ENCODE measurements at regions of chr16 and their contacts with region 1.

Region 1: DNA sequence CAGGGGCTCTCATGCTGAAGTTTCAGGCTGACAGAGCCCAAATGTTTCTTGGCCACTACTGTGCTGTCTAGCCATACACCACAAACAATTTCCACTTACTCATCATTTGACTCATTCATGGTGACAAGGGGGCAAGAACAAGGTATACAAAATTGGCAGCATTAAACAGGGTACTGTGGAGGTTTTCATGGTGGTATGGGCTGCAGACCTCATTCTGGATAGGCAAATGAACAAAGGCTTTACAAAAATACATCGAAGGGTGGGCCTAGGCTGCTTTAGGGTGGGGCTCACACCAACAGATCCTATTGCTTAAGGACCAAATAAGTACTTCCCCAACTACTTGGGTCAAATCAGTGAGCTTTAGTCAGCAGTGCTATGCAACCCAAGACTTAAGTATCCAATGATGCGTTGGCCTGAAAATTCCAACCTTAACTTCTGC is 53.0 kb downstream of the N4BP1 start:
- DNase-seq: peak; percentile 69 to 93 (median 84)
- H3K4me3 ChIP-seq: peak overlapping the region in 1 of 3 experiments; percentile 69
- H3K4me3 Mint-ChIP-seq: no peak overlapping the region
- H3K27ac ChIP-seq: peak overlapping the region; percentile 43 to 95
- H3K27ac Mint-ChIP-seq: peak overlapping the region; percentile 94 to 97 (median 97)
- H3K4me1 ChIP-seq: peaks cover 76 to 97% of the 10 kb centered on the region in 2 donors
- H3K4me1 Mint-ChIP-seq: peaks cover 86% of the 10 kb centered on the region
- H3K27me3 ChIP-seq: no peaks in the 10 kb centered on the region
- H3K27me3 Mint-ChIP-seq: no peaks in the 10 kb centered on the region
- CTCF ChIP-seq: no peak

Region 2: GRCh38 chr16:48378836-48379235 is 178.1 kb before region 1 on chr16:
- intact Hi-C with region 1: loop called in 1 of 2 experiments (anchors 5 kb)
- DNase-seq: peak; percentile 66 to 88 (median 68)
- H3K4me3 ChIP-seq: peak overlapping the region in 1 of 3 experiments; percentile 55
- H3K4me3 Mint-ChIP-seq: peak overlapping the region; percentile 52 to 79
- H3K27ac ChIP-seq: peak overlapping the region in 1 of 2 donors; percentile 65
- H3K27ac Mint-ChIP-seq: peak overlapping the region; percentile 74 to 97 (median 92)
- H3K4me1 ChIP-seq: peaks cover 64 to 87% of the 10 kb centered on the region in 2 donors
- H3K4me1 Mint-ChIP-seq: peaks cover 65% of the 10 kb centered on the region
- H3K27me3 ChIP-seq: no peaks in the 10 kb centered on the region
- H3K27me3 Mint-ChIP-seq: no peaks in the 10 kb centered on the region
- CTCF ChIP-seq: no peak

Region 3: GRCh38 chr16:48609652-48610029 is 52.7 kb after region 1 on chr16:
- intact Hi-C with region 1: loop called in 1 of 2 experiments (anchors 5 kb)
- DNase-seq: peak in 1 of 3 donors; percentile 40
- H3K4me3 ChIP-seq: peak overlapping the region; percentile 61 to 95 (median 94)
- H3K4me3 Mint-ChIP-seq: peak overlapping the region; percentile 90 to 93
- H3K27ac ChIP-seq: peak overlapping the region; percentile 45 to 88
- H3K27ac Mint-ChIP-seq: peak overlapping the region in 5 of 7 donors; percentile 84 to 94 (median 92)
- H3K4me1 ChIP-seq: peaks cover 82 to 89% of the 10 kb centered on the region in 2 donors
- H3K4me1 Mint-ChIP-seq: peaks cover 35% of the 10 kb centered on the region
- H3K27me3 ChIP-seq: no peaks in the 10 kb centered on the region
- H3K27me3 Mint-ChIP-seq: peaks cover 0 to 2% (median 0%) of the 10 kb centered on the region in 3 donors
- CTCF ChIP-seq: no peak

Region 4: DNA sequence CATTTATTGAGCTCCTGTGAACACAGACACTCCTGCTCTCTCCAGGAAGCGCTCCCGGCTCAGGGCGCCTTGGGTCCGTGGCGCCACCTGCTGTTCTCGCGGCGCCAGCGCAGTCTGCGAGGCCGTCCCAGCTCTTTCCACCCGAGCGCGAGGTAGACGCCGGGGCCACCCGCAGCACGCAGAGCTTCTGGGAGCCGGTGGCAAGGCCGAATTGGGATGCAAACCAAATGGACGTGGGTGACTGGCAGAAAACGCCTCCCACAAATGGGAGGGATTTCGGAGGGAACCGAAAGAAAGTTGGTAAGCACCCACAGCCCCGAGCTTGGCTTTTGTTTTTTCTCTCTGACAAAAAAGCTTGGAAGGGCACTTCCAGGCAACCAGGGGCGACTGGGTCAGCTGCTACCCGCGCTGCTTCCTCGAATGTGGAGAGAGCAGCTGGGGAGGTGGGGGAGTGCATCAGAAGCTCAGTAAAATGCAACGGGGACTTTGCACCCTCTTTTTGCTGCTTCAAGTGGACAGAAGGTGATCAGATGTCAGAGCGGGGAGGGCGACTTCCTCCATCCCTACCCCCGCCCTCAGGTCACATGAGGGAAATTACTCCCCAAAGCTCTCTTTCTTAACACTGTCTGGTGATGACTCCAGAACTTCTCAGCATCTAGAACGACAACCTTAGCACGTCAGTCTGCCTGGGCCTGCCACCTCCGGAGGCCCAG is 66.5 kb after region 1 on chr16:
- intact Hi-C with region 1: loop called (anchors 2 to 5 kb)
- DNase-seq: peak; percentile 95 to 97 (median 97)
- H3K4me3 ChIP-seq: peak overlapping the region; percentile 72 to 78 (median 77)
- H3K4me3 Mint-ChIP-seq: peak overlapping the region; percentile 87 to 93
- H3K27ac ChIP-seq: peak overlapping the region; percentile 87 to 94
- H3K27ac Mint-ChIP-seq: peak overlapping the region; percentile 97 to 99 (median 98)
- H3K4me1 ChIP-seq: peaks cover 42 to 43% of the 10 kb centered on the region in 2 donors
- H3K4me1 Mint-ChIP-seq: peaks cover 48% of the 10 kb centered on the region
- H3K27me3 ChIP-seq: no peaks in the 10 kb centered on the region
- H3K27me3 Mint-ChIP-seq: no peaks in the 10 kb centered on the region
- CTCF ChIP-seq: peak; percentile 99

Region 5: DNA sequence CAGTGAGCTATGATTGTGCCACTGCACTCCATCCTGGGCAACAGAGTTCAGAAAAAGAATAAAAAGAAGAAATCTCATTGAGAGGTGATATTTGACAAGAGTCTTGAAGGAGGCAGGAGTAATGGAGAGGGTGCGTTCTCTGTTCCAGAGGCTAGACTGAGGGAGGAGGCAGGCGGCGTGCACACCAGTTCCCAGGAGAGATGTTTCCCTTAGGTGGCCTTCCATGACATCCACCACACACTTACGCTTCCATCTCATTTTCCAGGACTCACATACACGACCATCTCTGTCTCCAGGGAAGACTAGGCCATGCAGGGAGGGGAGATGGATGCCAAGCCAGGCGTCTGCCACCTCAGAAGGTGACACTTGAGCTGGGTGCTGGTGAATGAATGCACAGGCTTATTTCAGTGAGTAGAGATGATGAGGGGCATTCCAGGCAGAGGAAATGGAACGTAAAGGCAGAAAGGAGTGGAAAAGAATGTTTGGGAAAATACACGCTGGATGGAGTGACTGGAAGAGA is 78.3 kb after region 1 on chr16:
- intact Hi-C with region 1: no loop called
- DNase-seq: no peak
- H3K4me3 ChIP-seq: no peak overlapping the region
- H3K4me3 Mint-ChIP-seq: no peak overlapping the region
- H3K27ac ChIP-seq: no peak overlapping the region
- H3K27ac Mint-ChIP-seq: no peak overlapping the region
- H3K4me1 ChIP-seq: peaks cover 1 to 3% of the 10 kb centered on the region in 2 donors
- H3K4me1 Mint-ChIP-seq: peaks cover 3% of the 10 kb centered on the region
- H3K27me3 ChIP-seq: no peaks in the 10 kb centered on the region
- H3K27me3 Mint-ChIP-seq: peaks cover 0 to 7% (median 6%) of the 10 kb centered on the region in 3 donors
- CTCF ChIP-seq: no peak

Region 6: GRCh38 chr16:48810803-48811453 is 254.0 kb after region 1 on chr16:
- intact Hi-C with region 1: no loop called
- DNase-seq: no peak
- H3K4me3 ChIP-seq: no peak overlapping the region
- H3K4me3 Mint-ChIP-seq: peak overlapping the region in 1 of 2 donors; percentile 81
- H3K27ac ChIP-seq: no peak overlapping the region
- H3K27ac Mint-ChIP-seq: no peak overlapping the region
- H3K4me1 ChIP-seq: no peaks in the 10 kb centered on the region
- H3K4me1 Mint-ChIP-seq: no peaks in the 10 kb centered on the region
- H3K27me3 ChIP-seq: peaks cover 29 to 42% of the 10 kb centered on the region in 2 donors
- H3K27me3 Mint-ChIP-seq: peaks cover 35 to 53% (median 37%) of the 10 kb centered on the region in 3 donors
- CTCF ChIP-seq: no peak

Region 7: DNA sequence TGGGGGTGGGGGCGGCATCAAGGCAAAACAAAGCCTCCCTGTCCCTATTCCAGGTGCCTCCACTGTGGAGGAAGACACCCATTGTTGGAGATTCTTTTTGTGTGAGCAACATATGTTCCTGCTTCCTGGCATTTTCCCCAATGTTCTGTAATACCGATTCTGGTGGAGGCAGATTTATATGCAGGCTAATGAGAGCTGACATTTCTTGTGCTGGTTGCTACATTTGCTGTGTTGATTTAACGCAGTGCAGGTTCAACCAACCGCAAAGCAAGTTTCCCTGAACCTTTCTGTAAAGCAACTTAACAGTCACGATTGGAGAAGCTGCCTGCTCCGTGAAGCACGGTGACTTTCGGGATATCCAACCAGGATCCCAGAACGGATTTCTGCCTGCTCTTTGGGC is 464.2 kb after region 1 on chr16:
- intact Hi-C with region 1: no loop called
- DNase-seq: no peak
- H3K4me3 ChIP-seq: no peak overlapping the region
- H3K4me3 Mint-ChIP-seq: no peak overlapping the region
- H3K27ac ChIP-seq: no peak overlapping the region
- H3K27ac Mint-ChIP-seq: no peak overlapping the region
- H3K4me1 ChIP-seq: no peaks in the 10 kb centered on the region
- H3K4me1 Mint-ChIP-seq: no peaks in the 10 kb centered on the region
- H3K27me3 ChIP-seq: no peaks in the 10 kb centered on the region
- H3K27me3 Mint-ChIP-seq: peaks cover 9 to 19% (median 10%) of the 10 kb centered on the region in 3 donors
- CTCF ChIP-seq: no peak